Natural killer cell (primary cell): ENCODE measurements at regions of chr7 and their contacts with region 1.

Region 1: DNA sequence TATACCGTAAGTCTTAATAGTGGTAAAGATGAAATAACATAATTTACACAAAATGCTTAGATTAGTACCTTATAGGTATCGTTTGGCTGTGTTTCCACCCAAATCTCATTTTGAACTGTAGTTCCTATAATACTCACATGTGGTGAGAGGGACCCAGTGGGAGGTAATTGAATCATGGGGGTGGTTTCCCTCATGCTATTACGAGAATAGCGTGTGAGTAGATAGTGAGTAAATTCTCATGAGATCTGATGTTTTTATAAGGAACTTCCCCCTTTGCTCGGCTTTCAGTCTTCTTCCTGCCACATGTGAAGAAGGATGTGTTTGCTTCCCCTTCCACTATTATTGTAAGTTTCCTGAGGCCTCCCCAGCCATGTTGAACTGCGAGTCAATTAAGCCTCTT is 426.3 kb upstream of the POT1 start:
- DNase-seq: no peak
- ATAC-seq: peak in 1 of 3 donors; percentile 56
- H3K4me3 ChIP-seq: no peak overlapping the region
- H3K4me3 Mint-ChIP-seq: no peak overlapping the region
- H3K27ac ChIP-seq: no peak overlapping the region
- H3K27ac Mint-ChIP-seq: no peak overlapping the region
- H3K4me1 ChIP-seq: no peaks in the 10 kb centered on the region
- H3K4me1 Mint-ChIP-seq: no peaks in the 10 kb centered on the region
- H3K27me3 ChIP-seq: no peaks in the 10 kb centered on the region
- H3K27me3 Mint-ChIP-seq: no peaks in the 10 kb centered on the region
- CTCF ChIP-seq: no peak

Region 2: DNA sequence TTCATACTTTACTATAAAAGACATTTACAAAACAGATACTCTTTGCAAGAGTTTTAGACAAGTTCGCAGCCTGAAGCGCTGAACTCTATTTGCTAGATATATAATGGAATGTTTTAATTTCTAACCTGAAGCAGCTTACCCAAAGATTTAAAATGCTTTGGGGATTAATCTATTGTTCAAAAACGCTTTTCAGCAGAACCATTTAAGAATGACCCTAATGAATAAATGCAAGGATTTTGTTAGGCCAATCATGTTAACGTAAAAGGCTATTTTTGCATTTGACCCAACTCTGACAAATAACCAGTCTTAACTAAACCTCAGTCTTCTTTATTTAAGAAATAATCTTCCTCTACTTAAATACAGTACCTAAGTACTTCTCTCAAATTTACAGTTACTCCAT is 19.6 kb before region 1 on chr7:
- intact Hi-C with region 1: loop called (anchors 1 kb)
- DNase-seq: no peak
- ATAC-seq: no peak
- H3K4me3 ChIP-seq: no peak overlapping the region
- H3K4me3 Mint-ChIP-seq: no peak overlapping the region
- H3K27ac ChIP-seq: no peak overlapping the region
- H3K27ac Mint-ChIP-seq: no peak overlapping the region
- H3K4me1 ChIP-seq: no peaks in the 10 kb centered on the region
- H3K4me1 Mint-ChIP-seq: no peaks in the 10 kb centered on the region
- H3K27me3 ChIP-seq: no peaks in the 10 kb centered on the region
- H3K27me3 Mint-ChIP-seq: no peaks in the 10 kb centered on the region
- CTCF ChIP-seq: no peak